ENCODE measurements at regions of chr4 and their contacts with region 1.

Region 1: GRCh38 chr4:89657931-89658700 is 178.8 kb downstream of the SNCA start:
- DNase-seq: no peak
- H3K4me3 ChIP-seq: no peak overlapping the region
- H3K27ac ChIP-seq: no peak overlapping the region
- H3K4me1 ChIP-seq: no peaks in the 10 kb centered on the region; the same call in 1 of the 2 replicates
- H3K27me3 ChIP-seq: no peaks in the 10 kb centered on the region
- CTCF ChIP-seq: no peak; the same call in 1 of the 2 replicates

Region 2: GRCh38 chr4:89336818-89337420 is 321.2 kb before region 1 on chr4:
- CTCF ChIA-PET with region 1: no interaction called
- POLR2A ChIA-PET with region 1: no interaction called
- intact Hi-C with region 1: no loop called
- DNase-seq: no peak
- H3K4me3 ChIP-seq: no peak overlapping the region
- H3K27ac ChIP-seq: no peak overlapping the region
- H3K4me1 ChIP-seq: no peaks in the 10 kb centered on the region
- H3K27me3 ChIP-seq: no peaks in the 10 kb centered on the region
- CTCF ChIP-seq: no peak

Region 3: DNA sequence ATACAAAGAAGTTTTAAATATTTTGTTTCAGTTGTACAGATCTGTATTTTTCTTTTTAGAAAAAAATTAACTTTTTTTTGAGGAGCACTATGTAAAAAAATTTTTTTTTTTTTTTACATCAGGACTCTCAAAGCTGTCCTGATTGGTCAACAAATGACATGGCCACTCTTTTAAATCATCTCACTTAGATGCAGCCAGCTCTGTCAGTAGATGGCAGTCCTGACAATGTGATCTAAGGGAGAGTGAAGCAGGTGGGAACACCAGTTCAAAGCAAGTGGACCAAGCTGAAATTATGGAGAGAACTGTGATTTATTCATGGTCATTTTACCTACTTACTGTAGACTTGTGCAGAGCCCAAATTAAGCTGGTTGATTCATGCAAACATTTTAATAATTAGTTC is 175.9 kb before region 1 on chr4:
- CTCF ChIA-PET with region 1: no interaction called
- POLR2A ChIA-PET with region 1: no interaction called
- intact Hi-C with region 1: loop called (anchors 10 kb)
- DNase-seq: no peak
- H3K4me3 ChIP-seq: no peak overlapping the region
- H3K27ac ChIP-seq: no peak overlapping the region
- H3K4me1 ChIP-seq: no peaks in the 10 kb centered on the region
- H3K27me3 ChIP-seq: no peaks in the 10 kb centered on the region
- CTCF ChIP-seq: peak; percentile 24; the same call in 1 of the 2 replicates

Region 4: GRCh38 chr4:89509708-89510281 is 148.3 kb before region 1 on chr4:
- CTCF ChIA-PET with region 1: no interaction called
- POLR2A ChIA-PET with region 1: no interaction called
- intact Hi-C with region 1: no loop called
- DNase-seq: no peak
- H3K4me3 ChIP-seq: no peak overlapping the region
- H3K27ac ChIP-seq: no peak overlapping the region
- H3K4me1 ChIP-seq: no peaks in the 10 kb centered on the region
- H3K27me3 ChIP-seq: no peaks in the 10 kb centered on the region
- CTCF ChIP-seq: no peak

Region 5: GRCh38 chr4:89741768-89742167 is 83.7 kb after region 1 on chr4:
- CTCF ChIA-PET with region 1: no interaction called
- POLR2A ChIA-PET with region 1: no interaction called
- intact Hi-C with region 1: no loop called
- DNase-seq: no peak
- H3K4me3 ChIP-seq: no peak overlapping the region
- H3K27ac ChIP-seq: no peak overlapping the region
- H3K4me1 ChIP-seq: no peaks in the 10 kb centered on the region
- H3K27me3 ChIP-seq: no peaks in the 10 kb centered on the region
- CTCF ChIP-seq: no peak

Region 6: GRCh38 chr4:89752932-89753581 is 94.9 kb after region 1 on chr4:
- CTCF ChIA-PET with region 1: no interaction called
- POLR2A ChIA-PET with region 1: no interaction called
- intact Hi-C with region 1: loop called (anchors 5 kb)
- DNase-seq: peak; percentile 45 to 51
- H3K4me3 ChIP-seq: peak overlapping the region; percentile 26; the same call in 1 of the 2 replicates
- H3K27ac ChIP-seq: peak overlapping the region; percentile 84
- H3K4me1 ChIP-seq: peaks cover 15% of the 10 kb centered on the region
- H3K27me3 ChIP-seq: no peaks in the 10 kb centered on the region
- CTCF ChIP-seq: no peak

Region 7: GRCh38 chr4:89868999-89869589 is 211.0 kb after region 1 on chr4:
- CTCF ChIA-PET with region 1: interaction called, 3 read pairs
- POLR2A ChIA-PET with region 1: no interaction called
- intact Hi-C with region 1: loop called (anchors 1 kb)
- DNase-seq: no peak
- H3K4me3 ChIP-seq: no peak overlapping the region
- H3K27ac ChIP-seq: no peak overlapping the region
- H3K4me1 ChIP-seq: no peaks in the 10 kb centered on the region
- H3K27me3 ChIP-seq: no peaks in the 10 kb centered on the region
- CTCF ChIP-seq: peak; percentile 66

Region 8: GRCh38 chr4:89906777-89907521 is 248.8 kb after region 1 on chr4:
- CTCF ChIA-PET with region 1: no interaction called
- POLR2A ChIA-PET with region 1: no interaction called
- intact Hi-C with region 1: loop called (anchors 5 kb)
- DNase-seq: no peak
- H3K4me3 ChIP-seq: no peak overlapping the region
- H3K27ac ChIP-seq: no peak overlapping the region
- H3K4me1 ChIP-seq: no peaks in the 10 kb centered on the region
- H3K27me3 ChIP-seq: no peaks in the 10 kb centered on the region
- CTCF ChIP-seq: no peak

Region 9: DNA sequence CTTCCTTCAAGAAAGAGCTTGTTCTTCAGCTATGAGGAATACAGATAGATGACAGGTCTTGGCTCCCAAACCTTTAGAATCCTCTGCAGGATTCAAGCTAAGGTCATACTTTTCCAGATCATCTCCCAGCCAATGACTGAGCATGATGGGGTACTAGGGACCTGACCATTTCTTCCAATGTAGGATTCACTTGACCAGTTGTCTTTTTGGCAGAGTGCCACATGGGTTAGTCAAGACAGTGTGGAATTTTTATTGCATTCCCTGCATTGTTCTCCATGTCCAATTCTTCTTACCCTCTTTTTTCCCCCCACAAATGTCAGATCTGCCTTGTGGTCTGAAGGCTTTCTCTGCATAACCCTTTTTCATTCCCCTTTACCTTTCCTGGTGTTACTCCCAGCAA is 568.6 kb after region 1 on chr4:
- CTCF ChIA-PET with region 1: no interaction called
- POLR2A ChIA-PET with region 1: no interaction called
- intact Hi-C with region 1: no loop called
- DNase-seq: peak in 1 of 2 experiments; percentile 36
- H3K4me3 ChIP-seq: no peak overlapping the region
- H3K27ac ChIP-seq: no peak overlapping the region
- H3K4me1 ChIP-seq: no peaks in the 10 kb centered on the region
- H3K27me3 ChIP-seq: no peaks in the 10 kb centered on the region
- CTCF ChIP-seq: no peak